BJ (cell line): ENCODE measurements at regions of chr15 and their contacts with region 1.

Region 1: GRCh38 chr15:29070449-29071231 is 184.9 kb downstream of the APBA2 start:
- DNase-seq: no peak
- H3K4me3 ChIP-seq: no peak overlapping the region
- H3K27me3 ChIP-seq: no peaks in the 10 kb centered on the region
- CTCF ChIP-seq: no peak

Region 2: GRCh38 chr15:29056839-29057450 is 13.7 kb before region 1 on chr15:
- CTCF ChIA-PET with region 1: no interaction called
- POLR2A ChIA-PET with region 1: no interaction called
- DNase-seq: no peak
- H3K4me3 ChIP-seq: no peak overlapping the region
- H3K27me3 ChIP-seq: no peaks in the 10 kb centered on the region
- CTCF ChIP-seq: no peak

Region 3: DNA sequence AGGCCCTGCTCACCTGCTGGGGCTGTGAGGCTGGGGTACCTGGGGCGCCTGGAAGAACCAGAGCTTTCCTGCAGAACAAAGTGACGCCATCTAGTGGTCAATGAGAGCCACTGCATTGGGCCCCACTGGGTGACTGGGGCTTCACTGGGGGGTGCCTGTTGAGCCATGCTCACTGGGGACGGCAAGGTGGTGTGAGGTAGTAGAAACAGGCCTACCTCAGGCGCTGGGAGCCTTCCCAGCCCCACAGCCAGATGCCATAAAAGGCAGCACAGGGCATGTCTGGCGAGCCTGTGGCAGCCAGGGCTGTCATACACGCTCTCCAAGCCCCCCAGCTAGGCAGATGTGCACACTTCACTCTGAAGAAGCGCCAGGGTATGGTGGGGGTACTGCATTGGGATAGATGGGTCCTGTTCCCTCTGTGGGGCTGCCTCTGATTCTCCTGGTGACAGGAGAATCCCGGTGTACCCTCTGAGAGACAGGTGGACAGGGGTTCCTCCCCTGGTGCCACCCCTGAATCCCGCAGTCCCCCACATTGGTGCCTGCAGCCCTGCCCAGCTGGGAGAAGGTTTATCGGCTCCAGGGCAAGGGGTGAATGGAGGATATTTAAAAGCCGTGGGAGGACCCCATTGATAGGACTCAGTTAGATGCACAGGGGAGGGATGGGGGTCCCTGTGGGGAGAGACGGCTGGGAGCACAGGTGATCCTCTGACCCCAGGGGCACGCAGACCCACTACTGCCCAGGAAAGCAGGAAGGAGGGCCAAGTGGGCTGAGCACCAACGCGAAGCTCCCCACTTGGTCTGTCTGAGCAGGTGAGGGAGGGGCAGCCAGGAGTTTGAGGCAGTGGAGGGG is 20.2 kb after region 1 on chr15:
- CTCF ChIA-PET with region 1: interaction called, 10 read pairs
- POLR2A ChIA-PET with region 1: no interaction called
- DNase-seq: no peak
- H3K4me3 ChIP-seq: no peak overlapping the region
- H3K27me3 ChIP-seq: no peaks in the 10 kb centered on the region
- CTCF ChIP-seq: peak; percentile 80

Region 4: DNA sequence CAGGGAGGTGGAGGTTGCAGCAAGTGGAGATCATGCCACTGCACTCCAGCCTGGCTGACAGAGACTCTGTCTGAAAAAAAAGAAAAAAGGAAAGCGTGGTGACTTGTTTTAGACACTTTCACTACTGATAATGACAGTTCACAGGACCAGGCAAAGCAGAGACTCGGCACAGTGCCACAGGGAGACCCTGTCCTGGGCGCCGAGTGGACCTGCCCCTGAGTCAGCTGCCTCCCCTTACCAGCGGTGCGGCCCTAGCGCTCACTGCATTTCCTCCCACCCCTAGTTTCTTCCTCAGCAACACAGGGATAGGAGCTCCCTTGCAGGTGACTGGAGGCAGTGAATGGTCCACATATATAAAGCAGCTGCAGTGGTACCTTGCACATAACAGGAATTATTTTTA is 237.7 kb after region 1 on chr15:
- CTCF ChIA-PET with region 1: no interaction called
- POLR2A ChIA-PET with region 1: no interaction called
- DNase-seq: no peak
- H3K4me3 ChIP-seq: no peak overlapping the region
- H3K27me3 ChIP-seq: no peaks in the 10 kb centered on the region
- CTCF ChIP-seq: no peak